ENCODE measurements at regions of chr13 and their contacts with region 1.

Region 1: GRCh38 chr13:78978381-78978998 is 319.5 kb upstream of the OBI1 start:
- DNase-seq: no peak
- H3K4me3 Mint-ChIP-seq: no peak overlapping the region
- H3K27ac Mint-ChIP-seq: no peak overlapping the region
- H3K4me1 Mint-ChIP-seq: no peaks in the 10 kb centered on the region
- H3K27me3 Mint-ChIP-seq: peaks cover 4% of the 10 kb centered on the region

Region 2: DNA sequence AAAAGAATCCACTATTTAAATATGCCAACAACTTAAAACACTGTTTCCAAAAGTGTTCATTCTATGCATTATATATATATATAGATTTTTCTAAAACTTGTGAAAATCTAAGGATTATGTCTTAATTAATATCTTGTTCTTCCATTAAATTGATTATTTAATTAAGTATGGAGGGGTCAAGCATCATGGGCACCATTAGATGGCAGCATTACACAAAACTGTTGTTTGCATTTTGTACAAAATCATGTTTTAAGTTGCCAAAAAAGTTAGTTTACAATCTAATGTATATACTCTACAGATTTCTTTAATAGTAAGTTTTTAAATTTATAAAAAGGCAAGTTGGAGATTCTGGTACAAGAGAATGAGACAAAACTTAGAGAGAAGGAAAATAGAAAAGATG is 846.7 kb before region 1 on chr13:
- CTCF ChIA-PET with region 1: interaction called, 66 read pairs
- POLR2A ChIA-PET with region 1: no interaction called
- intact Hi-C with region 1: loop called (anchors 1 kb)
- DNase-seq: no peak
- H3K4me3 Mint-ChIP-seq: no peak overlapping the region
- H3K27ac Mint-ChIP-seq: no peak overlapping the region
- H3K4me1 Mint-ChIP-seq: no peaks in the 10 kb centered on the region
- H3K27me3 Mint-ChIP-seq: peaks cover 5% of the 10 kb centered on the region

Region 3: GRCh38 chr13:78241278-78241919 is 737.1 kb before region 1 on chr13:
- CTCF ChIA-PET with region 1: interaction called, 17 read pairs
- POLR2A ChIA-PET with region 1: no interaction called
- intact Hi-C with region 1: no loop called
- DNase-seq: peak; percentile 41
- H3K4me3 Mint-ChIP-seq: no peak overlapping the region
- H3K27ac Mint-ChIP-seq: no peak overlapping the region
- H3K4me1 Mint-ChIP-seq: no peaks in the 10 kb centered on the region
- H3K27me3 Mint-ChIP-seq: peaks cover 2% of the 10 kb centered on the region

Measured in activated CD4-positive, alpha-beta memory T cell treated with anti-CD3 and anti-CD28 coated beads for 36 hours (primary cell).